Tibial artery (tissue), 4 donors: ENCODE measurements at regions of chr11 and their contacts with region 1.

Region 1: GRCh38 chr11:8392166-8392565 is 128.5 kb upstream of the LMO1 start:
- DNase-seq: no peak
- H3K4me3 ChIP-seq: no peak overlapping the region
- H3K27ac ChIP-seq: no peak overlapping the region
- H3K4me1 ChIP-seq: peaks cover 0 to 13% (median 4%) of the 10 kb centered on the region in 4 donors
- H3K27me3 ChIP-seq: no peaks in the 10 kb centered on the region
- CTCF ChIP-seq: no peak

Region 2: DNA sequence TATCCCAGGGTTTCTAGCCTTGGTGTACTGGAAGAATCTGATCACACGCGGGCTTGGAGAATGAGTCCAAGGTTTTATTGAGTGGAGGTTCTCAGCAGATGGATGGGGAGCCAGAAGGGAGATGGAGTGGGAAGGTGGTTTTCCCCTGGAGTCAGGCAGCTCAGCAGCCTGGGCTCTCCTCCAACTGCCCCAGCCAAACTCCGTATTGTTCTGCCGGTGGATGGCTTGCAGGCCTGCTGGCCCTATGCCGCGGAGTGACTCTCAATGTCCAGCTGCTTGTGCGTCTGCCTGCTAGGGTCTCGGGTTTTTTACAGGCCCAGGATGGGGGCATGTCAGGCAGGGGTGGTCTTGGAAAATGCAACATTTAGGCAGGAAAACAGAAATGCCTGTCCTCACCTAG is 33.9 kb after region 1 on chr11:
- intact Hi-C with region 1: loop called (anchors 2 kb)
- DNase-seq: no peak
- H3K4me3 ChIP-seq: no peak overlapping the region
- H3K27ac ChIP-seq: no peak overlapping the region
- H3K4me1 ChIP-seq: no peaks in the 10 kb centered on the region
- H3K27me3 ChIP-seq: no peaks in the 10 kb centered on the region
- CTCF ChIP-seq: no peak